Activated naive CD4-positive, alpha-beta T cell treated with anti-CD3 and anti-CD28 coated beads for 36 hours (primary cell): ENCODE measurements at regions of chr2 and their contacts with region 1.

Region 1: GRCh38 chr2:121530212-121530705 is 421 bp upstream of the RNU4ATAC start:
- DNase-seq: peak; percentile 86
- H3K4me3 Mint-ChIP-seq: peak overlapping the region; percentile 97
- H3K27ac Mint-ChIP-seq: peak overlapping the region; percentile 99
- H3K4me1 Mint-ChIP-seq: peaks cover 57% of the 10 kb centered on the region
- H3K27me3 Mint-ChIP-seq: no peaks in the 10 kb centered on the region

Region 2: GRCh38 chr2:120231974-120232635 is 1298.2 kb before region 1 on chr2:
- CTCF ChIA-PET with region 1: no interaction called
- intact Hi-C with region 1: loop called (anchors 5 kb)
- DNase-seq: peak; percentile 86
- H3K4me3 Mint-ChIP-seq: peak overlapping the region; percentile 82
- H3K27ac Mint-ChIP-seq: peak overlapping the region; percentile 94
- H3K4me1 Mint-ChIP-seq: peaks cover 47% of the 10 kb centered on the region
- H3K27me3 Mint-ChIP-seq: no peaks in the 10 kb centered on the region

Region 3: GRCh38 chr2:121400201-121400600 is 130.1 kb before region 1 on chr2:
- CTCF ChIA-PET with region 1: interaction called, 4 read pairs
- intact Hi-C with region 1: loop called (anchors 1 kb)
- DNase-seq: no peak
- H3K4me3 Mint-ChIP-seq: no peak overlapping the region
- H3K27ac Mint-ChIP-seq: no peak overlapping the region
- H3K4me1 Mint-ChIP-seq: no peaks in the 10 kb centered on the region
- H3K27me3 Mint-ChIP-seq: no peaks in the 10 kb centered on the region

Region 4: GRCh38 chr2:121596221-121597080 is 66.2 kb after region 1 on chr2:
- CTCF ChIA-PET with region 1: no interaction called
- intact Hi-C with region 1: loop called (anchors 1 kb)
- DNase-seq: peak; percentile 61
- H3K4me3 Mint-ChIP-seq: peak overlapping the region; percentile 82
- H3K27ac Mint-ChIP-seq: peak overlapping the region; percentile 87
- H3K4me1 Mint-ChIP-seq: peaks cover 49% of the 10 kb centered on the region
- H3K27me3 Mint-ChIP-seq: no peaks in the 10 kb centered on the region

Region 5: DNA sequence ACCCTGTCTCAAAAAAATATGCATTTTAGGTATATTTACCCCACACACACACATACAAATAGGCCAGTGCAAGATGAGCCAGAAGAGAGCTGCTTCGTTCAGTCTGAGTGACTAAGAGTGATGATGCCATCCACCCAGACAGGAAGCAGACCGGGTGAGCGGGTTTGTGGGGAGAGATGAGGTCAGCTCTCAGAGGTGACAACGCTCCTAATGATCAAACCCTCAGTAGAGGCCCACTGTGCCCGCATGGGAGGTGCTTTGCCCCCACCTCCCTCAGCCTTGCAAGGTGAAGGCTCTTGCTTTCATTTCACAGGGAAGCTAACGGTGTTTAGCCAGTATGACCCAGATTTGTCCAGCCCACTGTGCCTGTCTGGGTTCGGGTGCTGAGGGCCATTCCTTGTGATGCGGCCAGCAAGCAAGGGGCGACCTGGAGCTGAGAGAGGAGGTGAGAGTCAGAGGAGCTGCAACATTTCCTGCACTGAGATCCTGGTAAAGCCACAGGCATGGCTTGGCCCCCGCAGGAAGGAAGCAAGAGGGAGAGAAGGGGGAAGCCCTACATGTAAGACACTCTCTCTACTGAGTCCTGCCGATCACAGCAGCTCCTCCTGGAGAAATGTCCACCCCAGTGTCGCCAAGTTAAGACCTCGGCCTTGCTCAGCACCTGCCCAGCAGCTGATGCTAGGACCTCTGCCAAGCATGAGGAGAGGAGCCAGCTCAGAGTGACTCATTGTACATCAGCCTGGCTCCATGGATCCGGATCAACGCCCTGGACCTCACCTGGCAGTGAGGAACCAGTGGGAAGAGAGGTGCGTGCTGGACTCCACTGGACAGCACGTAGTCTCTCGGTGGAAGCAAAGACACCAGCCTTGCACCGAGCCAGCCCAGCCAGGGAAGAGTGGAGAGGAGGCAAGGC is 169.4 kb after region 1 on chr2:
- CTCF ChIA-PET with region 1: interaction called, 6 read pairs
- intact Hi-C with region 1: loop called (anchors 1 kb)
- DNase-seq: peak; percentile 96
- H3K4me3 Mint-ChIP-seq: peak overlapping the region; percentile 76
- H3K27ac Mint-ChIP-seq: peak overlapping the region; percentile 93
- H3K4me1 Mint-ChIP-seq: peaks cover 37% of the 10 kb centered on the region
- H3K27me3 Mint-ChIP-seq: no peaks in the 10 kb centered on the region

Region 6: DNA sequence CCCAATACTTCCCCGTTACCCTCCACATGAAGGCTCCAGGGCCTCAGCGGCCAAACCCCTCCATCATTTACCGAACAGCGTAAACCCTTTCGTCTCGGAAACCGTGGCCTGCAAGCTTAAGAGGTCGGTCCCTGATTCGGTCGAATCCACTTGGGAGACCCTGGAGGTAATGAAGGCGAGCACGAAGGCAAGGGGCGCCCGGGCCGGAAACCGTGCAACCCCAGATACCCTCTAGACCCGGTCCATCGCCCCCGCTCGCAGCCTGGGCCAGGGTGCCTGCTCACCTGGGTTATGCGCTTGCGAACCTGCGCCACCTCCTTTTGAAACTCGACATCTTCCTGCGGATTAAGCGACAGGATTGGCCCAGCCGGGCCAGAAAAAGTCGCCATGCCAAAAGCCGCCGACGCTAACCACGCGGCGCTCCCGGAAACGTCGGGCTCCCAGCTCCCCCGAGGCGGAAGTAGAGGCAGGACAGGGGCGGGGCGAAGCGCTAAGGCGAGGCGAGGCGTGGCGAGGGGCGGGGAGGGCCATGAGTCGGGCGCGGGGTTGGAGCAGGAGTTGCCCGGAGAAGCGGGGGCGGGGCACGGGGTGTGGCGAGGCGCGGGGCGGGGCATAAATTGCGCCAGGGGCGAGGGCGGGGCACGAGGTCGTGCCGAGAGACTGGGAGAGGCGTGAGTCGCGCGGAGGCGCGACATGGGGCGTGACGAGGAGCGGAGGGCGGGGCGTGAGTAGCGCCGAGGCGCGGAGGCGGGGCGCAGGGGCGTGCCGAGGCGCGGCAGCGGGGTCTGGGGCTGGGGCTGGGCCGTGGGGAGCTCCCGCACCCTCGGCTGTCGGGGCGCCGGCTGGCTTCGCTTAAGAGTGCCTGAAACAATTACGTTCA is 206.4 kb after region 1 on chr2 and contains the start of gene NIFK:
- CTCF ChIA-PET with region 1: interaction called, 3 read pairs
- intact Hi-C with region 1: loop called (anchors 1 kb)
- DNase-seq: peak; percentile 100
- H3K4me3 Mint-ChIP-seq: peak within 1 kb of the TSS; percentile 90
- H3K27ac Mint-ChIP-seq: peak within 1 kb of the TSS; percentile 93
- H3K4me1 Mint-ChIP-seq: peaks cover 41% of the 10 kb centered on the region
- H3K27me3 Mint-ChIP-seq: no peaks in the 10 kb centered on the region
- total RNA-seq, gene NIFK: 112 to 117 TPM